Tibial artery (tissue), 4 donors: ENCODE measurements at regions of chrX and their contacts with region 1.

Region 1: GRCh38 chrX:9464435-9465371 is at the start of gene TBL1X:
- DNase-seq: peak; percentile 22 to 71
- H3K4me3 ChIP-seq: peak within 1 kb of the TSS; percentile 77 to 83
- H3K27ac ChIP-seq: peak within 1 kb of the TSS; percentile 90 to 93
- H3K4me1 ChIP-seq: peaks cover 0 to 40% (median 16%) of the 10 kb centered on the region in 4 donors
- H3K27me3 ChIP-seq: no peaks in the 10 kb centered on the region
- CTCF ChIP-seq: no peak

Region 2: DNA sequence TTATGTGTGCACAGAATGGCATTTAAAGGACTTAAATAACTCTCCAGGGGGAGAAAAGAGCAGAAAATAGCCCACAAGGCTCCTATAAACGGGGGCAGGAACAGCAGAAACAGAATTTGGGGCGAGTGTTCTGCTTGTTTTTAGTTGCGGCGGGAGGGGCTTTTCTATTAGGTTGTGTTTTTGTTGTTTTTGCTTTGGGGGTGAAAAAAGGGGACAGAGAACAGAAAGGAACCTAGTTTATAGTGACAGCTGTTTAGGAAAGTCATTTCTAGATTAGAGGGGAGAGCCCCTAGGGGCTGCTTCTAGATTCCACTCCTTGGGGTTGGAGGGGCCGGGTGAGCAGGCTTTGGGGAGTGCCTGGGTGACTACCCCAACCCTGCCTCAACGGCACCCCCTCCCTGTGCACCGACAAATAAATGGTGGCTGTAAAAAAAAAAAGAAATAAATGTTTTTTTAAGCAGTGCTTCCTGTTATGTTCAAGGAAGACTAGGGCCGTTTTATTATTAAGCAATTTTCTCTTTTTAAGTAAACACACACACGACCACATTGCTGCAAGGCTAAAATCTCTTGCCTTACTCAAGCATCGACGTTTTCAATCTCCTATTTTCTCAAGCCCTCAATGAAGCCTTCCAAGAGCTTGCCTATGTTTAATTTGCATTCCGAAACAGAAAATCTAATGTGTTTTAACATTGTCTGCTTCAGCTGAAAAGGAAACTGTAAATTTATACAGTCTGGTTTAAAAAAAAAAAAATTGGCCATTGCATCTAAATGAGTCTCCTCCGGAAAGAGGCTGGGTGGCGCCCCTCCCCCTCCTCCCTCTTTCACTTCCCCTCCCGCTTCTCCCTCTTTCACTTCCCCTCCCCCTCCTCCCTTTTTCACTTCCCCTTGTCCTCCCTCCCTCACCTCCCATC is 123.2 kb before region 1 on chrX:
- intact Hi-C with region 1: loop called (anchors 2 kb)
- DNase-seq: peak in 1 of 2 donors; percentile 78
- H3K4me3 ChIP-seq: peak overlapping the region; percentile 43 to 48
- H3K27ac ChIP-seq: peak overlapping the region; percentile 72 to 74
- H3K4me1 ChIP-seq: peaks cover 5 to 32% (median 19%) of the 10 kb centered on the region in 4 donors
- H3K27me3 ChIP-seq: no peaks in the 10 kb centered on the region
- CTCF ChIP-seq: no peak